HEK293 (cell line): ENCODE measurements at regions of chr16 and their contacts with region 1.

Region 1: DNA sequence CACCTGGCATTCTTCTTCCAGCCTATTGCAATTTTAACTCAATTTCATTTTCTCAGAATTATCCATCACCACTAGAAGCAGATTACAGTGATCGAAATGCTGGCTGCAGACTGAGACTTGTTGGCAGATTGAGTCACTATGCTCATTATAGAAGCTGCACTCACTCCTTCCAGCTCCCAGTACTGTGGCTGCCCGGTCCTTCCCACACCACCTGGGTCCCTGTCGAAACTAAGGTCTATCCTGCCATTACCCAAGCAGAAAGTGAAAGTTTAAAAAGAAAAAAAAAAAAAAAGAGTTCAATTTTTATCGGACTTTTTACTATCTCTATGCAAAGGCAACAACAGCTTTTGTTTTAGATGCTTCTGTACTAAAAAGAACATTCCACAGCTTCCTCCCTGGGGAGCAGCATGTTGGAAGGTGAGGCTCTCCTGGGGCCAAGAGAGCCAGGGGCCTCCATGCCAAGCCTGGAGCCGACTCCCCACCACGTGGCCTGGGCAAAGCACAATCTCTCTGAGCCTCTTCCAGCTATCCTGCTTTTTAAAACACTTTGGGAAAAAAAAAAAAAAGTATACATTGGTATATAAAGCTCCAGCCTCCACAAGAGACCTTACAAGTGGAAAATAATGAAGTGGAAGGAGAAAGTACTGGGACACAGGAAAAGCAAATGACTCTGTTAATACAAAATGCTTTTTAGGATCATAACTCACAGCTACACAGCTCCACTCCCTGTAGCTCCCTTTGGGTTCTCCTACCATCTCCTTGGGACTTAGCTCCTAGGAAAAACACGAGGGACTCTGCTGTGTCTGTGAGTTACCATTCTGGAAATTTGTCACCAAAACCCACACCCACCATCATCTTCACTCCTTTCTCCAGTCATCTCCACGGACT is 77.8 kb downstream of the USP31 start:
- H3K4me3 ChIP-seq: no peak overlapping the region
- H3K27ac ChIP-seq: no peak overlapping the region
- H3K4me1 ChIP-seq: no peaks in the 10 kb centered on the region
- CTCF ChIP-seq: no peak

Region 2: GRCh38 chr16:23060458-23061320 is 10.8 kb before region 1 on chr16:
- CTCF ChIA-PET with region 1: interaction called, 11 read pairs
- POLR2A ChIA-PET with region 1: no interaction called
- H3K4me3 ChIP-seq: no peak overlapping the region
- H3K27ac ChIP-seq: no peak overlapping the region
- H3K4me1 ChIP-seq: no peaks in the 10 kb centered on the region
- CTCF ChIP-seq: peak; percentile 71

Region 3: DNA sequence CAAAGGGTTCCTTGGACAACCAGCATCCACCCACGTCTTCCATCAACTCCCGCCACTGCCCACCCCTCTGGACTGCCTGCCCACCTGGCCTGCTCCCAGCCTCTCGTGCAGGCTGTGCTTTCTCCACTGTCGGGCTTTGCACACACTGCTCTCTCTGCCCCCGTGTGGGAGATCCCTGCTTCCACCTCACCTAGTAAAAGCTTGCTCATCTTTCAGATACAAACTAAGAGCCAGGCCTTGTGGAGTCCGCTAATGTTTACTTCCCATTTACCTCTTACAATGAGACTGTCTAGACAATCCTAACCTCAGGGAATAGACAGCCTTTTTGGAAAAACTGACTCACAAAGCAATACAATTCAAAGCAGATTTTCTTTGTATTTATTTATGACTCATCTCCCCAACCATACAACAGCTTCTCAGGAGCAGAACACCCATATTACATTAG is 10.3 kb after region 1 on chr16:
- CTCF ChIA-PET with region 1: no interaction called
- POLR2A ChIA-PET with region 1: no interaction called
- H3K4me3 ChIP-seq: no peak overlapping the region
- H3K27ac ChIP-seq: no peak overlapping the region
- H3K4me1 ChIP-seq: no peaks in the 10 kb centered on the region
- CTCF ChIP-seq: no peak